Esophagus squamous epithelium (tissue), 5 donors: ENCODE measurements at regions of chr9 and their contacts with region 1.

Region 1: GRCh38 chr9:130680836-130681768 is 12.5 kb upstream of the EXOSC2 start:
- DNase-seq: no peak
- H3K4me3 ChIP-seq: peak overlapping the region; percentile 42 to 73 (median 52)
- H3K27ac ChIP-seq: no peak overlapping the region
- H3K4me1 ChIP-seq: peaks cover 13 to 18% (median 14%) of the 10 kb centered on the region in 3 donors
- H3K27me3 ChIP-seq: peaks cover 0 to 39% (median 0%) of the 10 kb centered on the region in 4 donors
- CTCF ChIP-seq: peak in 1 of 6 experiments; percentile 19
- POLR2A ChIP-seq: no peak

Region 2: DNA sequence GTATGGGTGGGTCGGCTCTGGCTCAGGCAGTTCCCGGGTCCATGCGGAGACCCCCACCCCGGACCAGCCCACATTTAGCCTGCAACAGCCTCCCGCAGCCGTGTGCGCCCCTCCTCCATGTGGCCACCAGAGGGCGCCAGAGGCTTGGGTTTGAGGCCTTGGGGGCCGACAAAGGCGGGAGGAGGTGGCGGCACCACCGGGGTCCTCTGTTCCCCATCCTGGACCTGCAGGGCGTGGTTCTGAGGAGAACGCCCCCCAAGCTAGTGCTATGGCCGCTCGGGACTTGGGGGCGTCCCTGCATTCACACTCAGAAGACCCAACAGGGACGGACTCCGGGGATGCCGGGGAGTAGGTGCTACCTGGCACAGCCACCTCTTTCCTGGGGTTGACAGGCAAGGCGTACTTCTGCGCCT is 219.9 kb before region 1 on chr9:
- intact Hi-C with region 1: loop called (anchors 2 kb)
- DNase-seq: no peak
- H3K4me3 ChIP-seq: no peak overlapping the region
- H3K27ac ChIP-seq: no peak overlapping the region
- H3K4me1 ChIP-seq: peaks cover 0 to 7% (median 0%) of the 10 kb centered on the region in 3 donors
- H3K27me3 ChIP-seq: peaks cover 0 to 4% (median 0%) of the 10 kb centered on the region in 4 donors
- CTCF ChIP-seq: peak; percentile 89 to 95 (median 91)
- POLR2A ChIP-seq: no peak